Activated CD4-positive, alpha-beta T cell treated with anti-CD3 and anti-CD28 coated beads for 36 hours (primary cell): ENCODE measurements at regions of chr11 and their contacts with region 1.

Region 1: DNA sequence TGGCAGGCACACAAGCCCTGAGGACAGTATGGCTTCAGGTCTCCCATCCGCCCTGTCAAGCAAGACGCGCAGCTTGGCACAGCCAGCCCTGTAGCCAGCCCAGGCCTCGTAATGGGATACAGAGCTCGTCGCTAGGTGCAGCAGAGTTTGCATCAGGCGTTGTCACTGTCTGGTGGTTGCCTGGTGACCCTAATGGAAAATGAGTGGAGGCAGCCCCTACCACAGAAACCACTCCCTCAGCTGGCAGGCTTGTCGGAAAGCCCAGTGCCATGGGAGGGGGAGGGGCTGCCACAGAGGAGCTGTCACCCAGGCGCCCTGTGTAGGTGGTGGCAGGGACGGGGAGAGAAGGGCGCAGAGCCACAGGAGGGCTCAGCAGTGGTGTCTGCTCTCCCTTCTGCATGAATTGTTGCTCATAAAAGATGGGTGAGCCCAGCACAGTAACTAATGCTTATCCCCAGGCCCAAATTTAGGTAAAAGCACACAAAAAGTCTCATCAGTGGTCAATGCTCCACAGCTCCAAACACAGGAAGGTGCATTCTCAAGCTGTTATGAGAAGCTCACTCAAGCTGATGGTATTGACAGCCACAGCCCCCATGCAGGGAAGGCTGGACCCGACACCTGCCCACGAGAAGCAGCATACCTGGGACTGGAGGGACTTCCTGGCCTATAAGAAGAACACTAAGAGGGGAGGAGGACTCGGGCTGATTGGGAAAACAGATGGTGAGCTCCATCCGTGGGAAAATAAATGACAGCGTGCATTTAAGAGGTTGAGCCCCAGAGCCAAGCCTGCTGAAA is 164.6 kb downstream of the ETS1 start:
- DNase-seq: peak; percentile 97
- ATAC-seq: peak; percentile 94
- H3K4me3 Mint-ChIP-seq: peak overlapping the region; percentile 36
- H3K27ac Mint-ChIP-seq: peak overlapping the region; percentile 82
- H3K4me1 Mint-ChIP-seq: peaks cover 53% of the 10 kb centered on the region
- H3K27me3 Mint-ChIP-seq: no peaks in the 10 kb centered on the region

Region 2: DNA sequence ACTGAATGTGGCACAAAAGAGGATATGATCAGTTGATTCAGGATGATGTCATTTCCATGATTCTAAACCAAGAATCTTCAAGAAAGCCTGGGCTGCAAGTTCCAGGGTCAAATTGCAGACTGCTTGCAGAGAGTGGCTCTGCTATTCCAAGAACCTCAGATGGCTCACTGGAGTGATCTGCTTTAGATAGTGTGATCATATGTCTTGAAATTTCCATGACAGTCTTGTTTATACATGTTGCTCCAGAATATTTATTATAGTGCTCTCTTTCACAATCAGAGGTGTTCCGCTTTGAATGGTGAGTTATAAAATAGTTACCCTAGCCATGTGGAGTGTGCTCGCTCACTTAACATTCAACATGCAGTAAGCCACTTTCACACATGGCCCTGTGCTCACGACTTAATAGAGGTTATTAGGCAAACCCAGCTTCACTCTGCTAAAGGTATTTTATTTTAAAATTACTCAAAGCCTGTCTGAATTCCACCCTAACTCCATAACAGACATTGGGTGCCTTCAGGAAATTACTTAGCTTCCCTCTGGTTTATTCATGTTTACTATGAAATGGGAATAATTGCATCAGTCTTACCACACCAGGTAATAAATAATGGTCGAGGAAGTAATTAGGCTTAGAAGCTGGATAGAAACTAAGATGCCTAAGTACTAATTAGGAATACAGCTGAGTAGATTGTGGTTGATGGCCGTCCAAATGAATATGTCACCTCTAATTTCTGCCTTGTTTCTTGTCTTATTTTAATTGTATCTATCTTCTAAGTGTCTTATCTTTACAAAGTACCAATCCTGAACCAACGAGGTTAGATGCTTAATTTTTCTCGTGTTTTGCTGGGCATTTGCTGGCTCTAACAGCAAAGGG is 23.3 kb before region 1 on chr11:
- CTCF ChIA-PET with region 1: interaction called, 14 read pairs
- POLR2A ChIA-PET with region 1: no interaction called
- intact Hi-C with region 1: no loop called
- DNase-seq: peak; percentile 22
- ATAC-seq: peak; percentile 77
- H3K4me3 Mint-ChIP-seq: no peak overlapping the region
- H3K27ac Mint-ChIP-seq: no peak overlapping the region
- H3K4me1 Mint-ChIP-seq: peaks cover 31% of the 10 kb centered on the region
- H3K27me3 Mint-ChIP-seq: no peaks in the 10 kb centered on the region

Region 3: DNA sequence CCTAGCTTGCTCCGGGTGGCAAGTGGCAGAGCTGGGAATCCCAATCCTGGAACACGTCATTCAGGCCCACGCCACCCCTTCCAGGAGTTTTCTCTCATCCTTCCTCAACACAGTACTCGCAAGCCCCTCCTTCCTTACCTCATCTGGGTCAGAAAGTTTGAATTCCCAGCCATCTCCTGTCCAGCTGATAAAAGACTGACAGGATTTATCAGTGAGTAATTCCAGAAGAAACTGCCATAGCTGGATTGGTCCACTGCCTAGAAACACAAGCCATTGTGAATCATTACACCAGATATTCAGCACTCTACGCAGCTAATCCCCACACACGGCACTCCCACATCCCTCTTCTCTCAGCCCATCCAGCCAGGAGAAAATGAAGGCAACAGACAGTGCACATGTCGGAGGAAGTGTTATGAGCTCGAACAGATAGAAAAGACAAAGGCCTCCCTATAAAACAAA is 40.6 kb after region 1 on chr11:
- CTCF ChIA-PET with region 1: interaction called, 3 read pairs
- POLR2A ChIA-PET with region 1: interaction called, 6 read pairs
- intact Hi-C with region 1: loop called in 1 of 2 experiments (anchors 2 kb)
- DNase-seq: no peak
- ATAC-seq: no peak
- H3K4me3 Mint-ChIP-seq: peak overlapping the region; percentile 26
- H3K27ac Mint-ChIP-seq: peak overlapping the region; percentile 99
- H3K4me1 Mint-ChIP-seq: peaks cover 94% of the 10 kb centered on the region
- H3K27me3 Mint-ChIP-seq: no peaks in the 10 kb centered on the region